ENCODE measurements at regions of chr13 and their contacts with region 1.

Region 1: GRCh38 chr13:32650705-32651311 is 64.6 kb downstream of the PDS5B start:
- DNase-seq: peak; percentile 80
- ATAC-seq: peak; percentile 90
- H3K4me3 Mint-ChIP-seq: no peak overlapping the region
- H3K27ac Mint-ChIP-seq: peak overlapping the region; percentile 72
- H3K4me1 Mint-ChIP-seq: peaks cover 47% of the 10 kb centered on the region
- H3K27me3 Mint-ChIP-seq: no peaks in the 10 kb centered on the region

Region 2: DNA sequence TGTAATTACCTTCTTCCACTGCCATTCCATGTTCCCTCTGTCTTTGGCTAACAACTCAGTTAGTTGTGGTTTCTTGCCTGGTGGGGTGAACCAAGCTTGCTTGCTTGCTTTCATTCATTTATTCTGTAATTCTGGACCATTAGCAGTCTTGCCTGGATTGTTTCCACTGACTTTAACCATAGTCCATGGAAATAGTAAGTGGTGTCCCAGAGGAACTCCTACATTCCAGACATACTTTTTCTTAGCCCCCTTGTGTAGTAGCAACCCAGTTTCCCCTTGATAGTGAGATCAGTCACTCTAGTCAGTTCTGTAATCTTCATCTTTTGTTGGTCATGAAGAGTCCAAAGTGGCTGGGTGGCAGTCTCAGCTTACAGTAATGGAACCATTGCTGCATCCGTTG is 41.4 kb before region 1 on chr13:
- CTCF ChIA-PET with region 1: interaction called, 11 read pairs
- POLR2A ChIA-PET with region 1: no interaction called
- intact Hi-C with region 1: no loop called
- DNase-seq: no peak
- ATAC-seq: no peak
- H3K4me3 Mint-ChIP-seq: no peak overlapping the region
- H3K27ac Mint-ChIP-seq: no peak overlapping the region
- H3K4me1 Mint-ChIP-seq: peaks cover 40% of the 10 kb centered on the region
- H3K27me3 Mint-ChIP-seq: no peaks in the 10 kb centered on the region

Region 3: GRCh38 chr13:32622827-32623226 is 28.0 kb before region 1 on chr13:
- CTCF ChIA-PET with region 1: interaction called, 9 read pairs
- POLR2A ChIA-PET with region 1: no interaction called
- intact Hi-C with region 1: loop called in 1 of 2 experiments (anchors 1 kb)
- DNase-seq: peak; percentile 54
- ATAC-seq: peak; percentile 96
- H3K4me3 Mint-ChIP-seq: no peak overlapping the region
- H3K27ac Mint-ChIP-seq: peak overlapping the region; percentile 62
- H3K4me1 Mint-ChIP-seq: peaks cover 45% of the 10 kb centered on the region
- H3K27me3 Mint-ChIP-seq: no peaks in the 10 kb centered on the region

Region 4: DNA sequence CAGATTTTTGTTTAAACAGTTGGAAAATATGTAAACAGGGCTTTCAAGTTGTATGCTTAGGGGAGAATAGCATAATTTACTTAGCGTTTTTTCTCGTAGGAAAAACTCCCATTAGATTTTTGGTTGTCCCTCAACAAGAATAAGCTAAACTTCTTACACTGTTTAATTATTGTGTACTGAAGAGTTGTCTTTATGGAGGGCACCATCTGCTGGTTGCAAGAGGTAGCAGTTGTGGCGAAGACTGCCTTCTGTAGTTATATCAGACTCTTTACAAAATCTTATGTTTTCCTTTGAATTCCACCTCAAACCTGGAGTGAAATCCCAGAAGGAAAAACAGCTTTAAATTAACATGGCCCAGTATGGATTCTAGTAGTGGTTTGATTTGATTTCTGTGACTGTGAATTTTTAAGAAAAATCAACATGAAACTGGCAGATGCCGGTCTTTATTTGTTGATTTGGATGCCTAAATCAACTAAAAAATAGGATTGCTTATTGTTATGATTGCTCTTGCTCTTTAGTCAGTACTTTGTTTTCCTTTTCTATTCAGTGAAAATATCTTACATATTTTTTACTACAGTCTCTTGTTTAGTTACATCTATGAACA is 11.2 kb before region 1 on chr13:
- CTCF ChIA-PET with region 1: interaction called, 62 read pairs
- POLR2A ChIA-PET with region 1: interaction called, 5 read pairs
- intact Hi-C with region 1: no loop called
- DNase-seq: peak; percentile 66
- ATAC-seq: peak; percentile 69
- H3K4me3 Mint-ChIP-seq: no peak overlapping the region
- H3K27ac Mint-ChIP-seq: no peak overlapping the region
- H3K4me1 Mint-ChIP-seq: peaks cover 40% of the 10 kb centered on the region
- H3K27me3 Mint-ChIP-seq: no peaks in the 10 kb centered on the region

Region 5: GRCh38 chr13:32669030-32669646 is 18.3 kb after region 1 on chr13:
- CTCF ChIA-PET with region 1: interaction called, 29 read pairs
- POLR2A ChIA-PET with region 1: no interaction called
- intact Hi-C with region 1: no loop called
- DNase-seq: peak; percentile 12
- ATAC-seq: peak; percentile 60
- H3K4me3 Mint-ChIP-seq: no peak overlapping the region
- H3K27ac Mint-ChIP-seq: no peak overlapping the region
- H3K4me1 Mint-ChIP-seq: peaks cover 9% of the 10 kb centered on the region
- H3K27me3 Mint-ChIP-seq: no peaks in the 10 kb centered on the region

Region 6: GRCh38 chr13:33017323-33017929 is 366.6 kb after region 1 on chr13:
- CTCF ChIA-PET with region 1: interaction called, 5 read pairs
- POLR2A ChIA-PET with region 1: no interaction called
- intact Hi-C with region 1: loop called in 1 of 2 experiments (anchors 10 kb)
- DNase-seq: peak; percentile 74
- ATAC-seq: peak; percentile 98
- H3K4me3 Mint-ChIP-seq: peak overlapping the region; percentile 52
- H3K27ac Mint-ChIP-seq: no peak overlapping the region
- H3K4me1 Mint-ChIP-seq: peaks cover 9% of the 10 kb centered on the region
- H3K27me3 Mint-ChIP-seq: peaks cover 56% of the 10 kb centered on the region

Region 7: GRCh38 chr13:34300559-34300958 is 1649.8 kb after region 1 on chr13:
- CTCF ChIA-PET with region 1: no interaction called
- POLR2A ChIA-PET with region 1: no interaction called
- intact Hi-C with region 1: no loop called
- DNase-seq: no peak
- ATAC-seq: no peak
- H3K4me3 Mint-ChIP-seq: no peak overlapping the region
- H3K27ac Mint-ChIP-seq: no peak overlapping the region
- H3K4me1 Mint-ChIP-seq: no peaks in the 10 kb centered on the region
- H3K27me3 Mint-ChIP-seq: no peaks in the 10 kb centered on the region

Measured in activated CD4-positive, alpha-beta T cell treated with anti-CD3 and anti-CD28 coated beads for 36 hours (primary cell).